Activated T-helper 2 cell treated with anti-CD3 and anti-CD28 coated beads, Interferon-gamma antibody, Interleukin-2, Interleukin-4, amounts not matched to agents 10 μg/mL and 5 μg/mL and 100 μg/mL, durations not matched to agents 14 hours and 24 hours and 36 hours (primary cell): ENCODE measurements at regions of chr1 and their contacts with region 1.

Region 1: GRCh38 chr1:172638885-172639831 is 19.7 kb upstream of the FASLG start:
- DNase-seq: peak; percentile 76
- H3K4me3 Mint-ChIP-seq: peak overlapping the region; percentile 47
- H3K27ac Mint-ChIP-seq: peak overlapping the region; percentile 98
- H3K4me1 Mint-ChIP-seq: peaks cover 74% of the 10 kb centered on the region
- H3K27me3 Mint-ChIP-seq: peaks cover 5% of the 10 kb centered on the region

Region 2: GRCh38 chr1:172357753-172358385 is 281.3 kb before region 1 on chr1:
- intact Hi-C with region 1: loop called (anchors 1 kb)
- DNase-seq: no peak
- H3K4me3 Mint-ChIP-seq: no peak overlapping the region
- H3K27ac Mint-ChIP-seq: peak overlapping the region; percentile 82
- H3K4me1 Mint-ChIP-seq: peaks cover 52% of the 10 kb centered on the region
- H3K27me3 Mint-ChIP-seq: no peaks in the 10 kb centered on the region

Region 3: DNA sequence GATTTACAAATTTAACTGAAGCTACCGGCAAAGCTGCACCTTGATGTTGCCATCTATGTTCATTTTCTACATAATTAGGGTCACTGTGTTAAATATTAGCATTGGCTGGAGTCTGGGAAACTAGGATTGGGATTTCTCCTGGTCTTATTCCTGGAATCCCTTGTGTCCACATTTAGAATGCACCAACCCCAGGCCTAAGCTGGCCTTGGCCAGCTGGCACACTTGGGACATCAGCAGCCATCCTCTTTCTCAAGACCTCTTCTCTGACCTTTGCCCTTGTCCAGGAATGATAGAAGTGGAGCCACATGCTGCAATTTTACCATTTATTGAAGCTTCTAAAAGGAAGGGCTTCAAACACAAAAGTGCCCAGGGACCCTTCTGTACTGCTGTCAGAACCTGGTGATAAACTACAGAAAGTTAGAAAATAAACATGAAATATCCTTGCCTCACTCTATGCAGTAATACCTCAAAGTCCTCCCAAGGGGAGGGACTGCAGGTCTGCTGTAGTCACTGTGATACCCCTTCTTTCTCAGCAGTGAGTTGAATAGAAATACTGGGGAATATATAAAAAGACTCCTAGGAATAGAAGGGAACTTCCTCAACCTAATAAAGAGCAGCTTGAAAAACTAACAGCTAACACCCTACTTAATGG is 181.6 kb before region 1 on chr1:
- intact Hi-C with region 1: no loop called
- DNase-seq: no peak
- H3K4me3 Mint-ChIP-seq: no peak overlapping the region
- H3K27ac Mint-ChIP-seq: no peak overlapping the region
- H3K4me1 Mint-ChIP-seq: peaks cover 4% of the 10 kb centered on the region
- H3K27me3 Mint-ChIP-seq: peaks cover 30% of the 10 kb centered on the region

Region 4: DNA sequence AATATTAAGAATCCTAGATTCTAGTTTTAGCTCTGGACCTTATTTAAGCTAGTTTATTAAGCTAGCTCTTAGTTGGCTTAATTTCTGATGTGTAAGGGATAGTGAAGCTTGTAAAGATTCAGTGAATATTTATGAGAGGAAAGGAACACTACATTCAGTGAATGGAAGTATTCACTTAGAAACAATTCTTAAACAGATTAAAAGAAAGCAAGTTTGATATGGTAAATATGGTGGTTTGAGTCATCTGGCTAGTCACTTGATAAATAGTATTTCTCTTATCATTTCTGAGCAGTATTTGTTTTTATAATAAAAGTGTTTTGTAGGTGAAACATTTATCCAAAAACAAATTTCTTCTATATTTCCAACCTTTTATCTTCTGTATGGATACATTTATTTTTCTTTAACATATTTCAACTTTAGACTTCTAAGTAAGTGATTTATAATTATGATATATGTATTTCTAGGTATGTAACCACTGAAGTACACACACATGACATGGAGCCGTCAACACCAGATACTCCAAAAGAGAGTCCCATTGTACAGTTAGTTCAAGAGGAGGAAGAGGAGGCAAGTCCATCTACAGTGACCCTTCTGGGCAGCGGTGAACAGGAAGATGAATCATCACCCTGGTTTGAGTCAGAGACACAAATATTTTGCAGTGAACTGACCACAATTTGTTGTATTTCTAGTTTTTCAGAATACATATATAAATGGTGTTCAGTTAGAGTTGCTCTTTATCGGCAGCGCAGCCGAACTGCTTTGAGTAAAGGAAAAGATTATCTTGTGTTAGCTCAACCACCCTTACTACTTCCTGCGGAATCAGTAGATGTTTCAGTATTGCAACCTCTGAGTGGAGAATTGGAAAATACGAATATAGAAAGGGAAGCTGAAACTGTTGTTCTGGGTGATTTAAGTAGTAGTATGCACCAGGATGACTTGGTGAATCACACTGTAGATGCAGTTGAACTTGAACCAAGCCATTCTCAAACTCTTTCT is 50.6 kb before region 1 on chr1:
- intact Hi-C with region 1: loop called (anchors 1 kb)
- DNase-seq: no peak
- H3K4me3 Mint-ChIP-seq: no peak overlapping the region
- H3K27ac Mint-ChIP-seq: peak overlapping the region; percentile 72
- H3K4me1 Mint-ChIP-seq: peaks cover 28% of the 10 kb centered on the region
- H3K27me3 Mint-ChIP-seq: no peaks in the 10 kb centered on the region

Region 5: GRCh38 chr1:172627702-172628101 is 11.5 kb before region 1 on chr1:
- intact Hi-C with region 1: no loop called
- DNase-seq: no peak
- H3K4me3 Mint-ChIP-seq: no peak overlapping the region
- H3K27ac Mint-ChIP-seq: no peak overlapping the region
- H3K4me1 Mint-ChIP-seq: peaks cover 45% of the 10 kb centered on the region
- H3K27me3 Mint-ChIP-seq: peaks cover 9% of the 10 kb centered on the region

Region 6: GRCh38 chr1:172699111-172699510 is 60.0 kb after region 1 on chr1:
- intact Hi-C with region 1: loop called (anchors 1 kb)
- DNase-seq: peak; percentile 72
- H3K4me3 Mint-ChIP-seq: peak overlapping the region; percentile 41
- H3K27ac Mint-ChIP-seq: peak overlapping the region; percentile 91
- H3K4me1 Mint-ChIP-seq: peaks cover 54% of the 10 kb centered on the region
- H3K27me3 Mint-ChIP-seq: no peaks in the 10 kb centered on the region

Region 7: GRCh38 chr1:172837816-172838680 is 198.9 kb after region 1 on chr1:
- intact Hi-C with region 1: loop called (anchors 1 kb)
- DNase-seq: no peak
- H3K4me3 Mint-ChIP-seq: no peak overlapping the region
- H3K27ac Mint-ChIP-seq: no peak overlapping the region
- H3K4me1 Mint-ChIP-seq: peaks cover 29% of the 10 kb centered on the region
- H3K27me3 Mint-ChIP-seq: peaks cover 53% of the 10 kb centered on the region